Cardiac septum (tissue), 1 donor: ENCODE measurements at regions of chr3 and their contacts with region 1.

Region 1: DNA sequence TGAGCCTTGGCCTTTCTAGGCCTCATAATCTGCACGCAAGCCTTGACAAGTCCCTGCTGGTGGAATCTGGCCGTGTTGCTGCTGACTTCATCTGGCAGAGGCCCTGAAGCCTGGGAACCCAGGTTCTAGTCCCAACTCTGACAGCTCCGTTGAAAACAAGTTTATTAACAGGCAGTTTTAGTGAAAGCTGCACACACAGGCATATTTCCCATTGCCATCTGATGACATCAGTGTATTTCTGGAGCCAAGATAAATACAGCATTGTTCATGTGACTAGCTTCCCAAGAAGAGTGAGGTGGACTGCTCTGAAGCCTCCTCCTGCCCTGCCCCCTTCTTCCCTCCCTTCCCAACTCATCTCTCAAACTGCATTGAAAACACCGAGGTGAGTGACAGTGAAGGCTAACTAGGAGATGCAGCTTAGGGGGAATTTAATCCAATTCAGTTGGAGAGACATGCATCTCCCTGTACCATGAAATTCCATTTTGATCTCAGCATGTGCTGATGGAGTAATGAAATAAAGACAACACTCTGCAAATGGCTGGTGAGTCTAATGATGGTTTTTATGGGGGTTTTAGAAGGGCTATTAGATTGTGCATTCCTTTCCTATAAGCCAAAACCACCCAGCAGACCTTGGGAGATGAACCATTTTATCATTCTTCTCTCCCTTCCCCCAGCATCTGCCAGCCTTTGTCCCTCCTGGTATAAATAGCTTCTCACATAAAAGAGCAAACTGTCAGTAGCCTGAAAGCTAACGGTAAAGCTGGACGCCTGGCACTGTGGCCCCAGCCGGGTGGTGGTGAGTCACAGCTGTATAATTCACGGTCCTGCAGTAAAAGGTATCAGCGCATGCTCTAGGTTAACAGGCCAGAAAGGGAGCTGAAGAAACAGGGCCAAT is 38.0 kb downstream of the PRICKLE2 start:
- DNase-seq: peak; percentile 81

Region 2: DNA sequence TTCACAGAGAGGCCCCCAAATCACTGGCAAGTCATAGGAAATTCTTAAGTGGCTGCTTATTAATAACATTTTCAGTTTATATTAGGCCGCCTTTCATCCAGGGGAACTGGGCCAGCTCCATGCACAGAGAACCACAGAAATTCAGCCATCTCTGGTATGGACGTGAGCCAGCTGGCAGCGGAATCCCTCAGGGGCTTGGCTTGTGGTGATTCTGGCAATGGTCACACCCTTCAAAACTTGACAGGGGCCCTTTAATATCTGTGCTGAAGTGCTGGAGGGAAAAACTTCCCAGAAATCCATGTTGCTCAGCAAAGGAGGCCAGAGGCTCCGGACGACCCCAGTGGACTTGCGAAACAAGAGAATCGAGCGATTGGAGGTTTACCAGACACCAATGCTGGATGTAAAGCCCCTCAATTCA is 26.7 kb after region 1 on chr3:
- intact Hi-C with region 1: loop called (anchors 2 kb)
- DNase-seq: peak; percentile 81

Region 3: DNA sequence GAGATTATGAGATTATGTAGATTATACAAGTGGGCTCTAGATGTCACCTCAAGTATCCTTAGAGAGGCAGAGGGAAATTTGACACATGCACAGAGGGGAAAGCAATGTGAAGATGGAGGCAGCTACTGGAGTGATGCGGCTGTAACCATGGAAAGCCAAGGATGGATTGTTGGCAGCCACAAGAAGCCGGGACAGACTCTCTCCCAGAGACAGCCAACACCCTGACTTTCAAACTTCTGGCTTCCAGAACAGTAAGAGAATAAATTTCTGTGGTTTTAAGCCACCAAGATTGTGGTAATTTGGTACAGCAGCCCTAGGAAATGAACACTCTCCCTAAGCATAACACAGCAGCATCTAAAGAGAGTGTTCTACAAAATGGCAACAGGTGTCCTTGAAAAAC is 72.3 kb after region 1 on chr3:
- intact Hi-C with region 1: loop called (anchors 2 kb)
- DNase-seq: no peak

Region 4: GRCh38 chr3:64321747-64322146 is 134.4 kb after region 1 on chr3:
- intact Hi-C with region 1: loop called (anchors 10 kb)
- DNase-seq: no peak